Activated CD8-positive, alpha-beta memory T cell treated with anti-CD3 and anti-CD28 coated beads, Interleukin-2, amount 10 ng/mL, durations not matched to agents 7 days and 5 days (primary cell): ENCODE measurements at regions of chr14 and their contacts with region 1.

Region 1: GRCh38 chr14:50106178-50106577 is 10.2 kb downstream of the VCPKMT start:
- DNase-seq: no peak
- ATAC-seq: no peak
- H3K4me3 Mint-ChIP-seq: no peak overlapping the region
- H3K27ac Mint-ChIP-seq: no peak overlapping the region
- H3K4me1 Mint-ChIP-seq: peaks cover 32% of the 10 kb centered on the region
- H3K27me3 Mint-ChIP-seq: no peaks in the 10 kb centered on the region

Region 2: GRCh38 chr14:49879683-49880204 is 226.4 kb before region 1 on chr14:
- CTCF ChIA-PET with region 1: interaction called, 15 read pairs
- DNase-seq: peak; percentile 83
- ATAC-seq: peak; percentile 96
- H3K4me3 Mint-ChIP-seq: no peak overlapping the region
- H3K27ac Mint-ChIP-seq: peak overlapping the region; percentile 52
- H3K4me1 Mint-ChIP-seq: peaks cover 24% of the 10 kb centered on the region
- H3K27me3 Mint-ChIP-seq: no peaks in the 10 kb centered on the region

Region 3: DNA sequence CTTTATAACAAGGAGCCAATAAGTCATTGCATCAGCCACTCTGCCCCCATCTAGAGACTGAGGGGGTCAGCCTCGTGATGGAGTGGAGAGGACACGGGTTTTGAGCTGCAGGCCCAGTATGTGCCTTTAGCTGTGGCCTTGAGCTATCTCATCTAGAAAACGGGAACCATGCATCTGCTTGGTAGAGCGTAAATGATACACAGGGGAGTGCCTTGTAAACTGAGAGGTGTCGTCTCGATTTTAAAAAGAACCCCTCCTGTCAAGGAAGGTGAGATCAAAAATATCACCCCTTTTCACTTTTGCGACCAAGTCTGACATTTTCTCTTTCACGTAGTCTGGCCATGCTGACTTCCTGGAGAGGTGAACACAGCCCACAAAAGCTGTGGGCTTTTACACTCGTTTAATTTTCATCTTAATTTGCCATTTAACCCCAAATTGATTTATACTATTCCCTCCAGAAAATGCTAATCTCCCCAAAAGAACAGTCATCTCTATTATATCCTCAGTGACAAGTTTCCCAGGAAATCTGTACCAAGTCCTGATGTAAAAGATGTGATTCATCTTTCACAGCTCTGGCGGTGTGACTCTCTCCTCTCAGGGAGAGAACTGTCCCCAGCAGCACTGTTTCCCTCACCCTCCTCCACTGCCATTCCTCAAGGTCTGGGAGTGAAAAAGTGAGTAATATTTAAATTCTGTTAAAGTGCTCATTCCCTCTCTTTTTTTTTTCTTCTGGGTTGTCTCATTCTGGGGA is 20.4 kb before region 1 on chr14:
- CTCF ChIA-PET with region 1: interaction called, 19 read pairs
- DNase-seq: peak; percentile 56
- ATAC-seq: no peak
- H3K4me3 Mint-ChIP-seq: peak overlapping the region; percentile 52
- H3K27ac Mint-ChIP-seq: peak overlapping the region; percentile 95
- H3K4me1 Mint-ChIP-seq: peaks cover 91% of the 10 kb centered on the region
- H3K27me3 Mint-ChIP-seq: no peaks in the 10 kb centered on the region